Activated T-helper 2 cell treated with anti-CD3 and anti-CD28 coated beads, Interferon-gamma antibody, Interleukin-2, Interleukin-4, amounts not matched to agents 10 μg/mL and 5 μg/mL and 100 μg/mL, durations not matched to agents 14 hours and 24 hours and 36 hours (primary cell): ENCODE measurements at regions of chr11 and their contacts with region 1.

Region 1: DNA sequence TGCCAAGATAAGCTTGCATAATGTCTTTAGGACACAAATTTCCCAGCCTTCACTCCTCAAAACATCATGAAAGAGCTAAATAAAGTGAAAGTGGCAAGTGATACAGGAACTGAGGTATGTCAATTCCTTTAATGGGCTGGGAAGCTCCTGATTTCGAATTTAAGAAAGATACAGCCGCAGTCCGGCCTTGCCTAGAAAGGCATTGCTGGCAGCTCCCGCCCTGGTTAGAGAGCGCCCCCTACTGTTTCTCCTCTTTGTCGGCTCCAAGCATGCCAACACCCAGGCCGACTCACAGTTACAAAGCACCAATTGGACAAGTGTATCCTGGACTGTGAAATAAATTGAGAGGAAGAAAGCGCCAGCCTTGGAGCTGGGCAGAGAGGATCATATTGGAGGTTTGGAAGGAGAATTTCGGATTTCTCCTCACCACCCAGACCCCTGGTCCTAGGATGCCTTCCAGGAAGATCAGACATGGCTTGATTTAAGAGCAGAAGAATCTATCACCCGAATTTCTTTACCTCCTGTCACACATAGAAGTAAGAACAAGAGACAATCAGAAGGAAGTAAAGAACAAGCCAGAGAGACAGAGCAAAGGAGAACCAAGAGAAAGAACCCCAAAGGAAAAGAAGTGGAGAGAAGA is 84.0 kb downstream of the FAM76B start:
- DNase-seq: peak; percentile 73
- H3K4me3 Mint-ChIP-seq: no peak overlapping the region
- H3K27ac Mint-ChIP-seq: no peak overlapping the region
- H3K4me1 Mint-ChIP-seq: peaks cover 19% of the 10 kb centered on the region
- H3K27me3 Mint-ChIP-seq: no peaks in the 10 kb centered on the region

Region 2: GRCh38 chr11:95505927-95506426 is 199.6 kb before region 1 on chr11:
- intact Hi-C with region 1: loop called (anchors 5 kb)
- DNase-seq: no peak
- H3K4me3 Mint-ChIP-seq: no peak overlapping the region
- H3K27ac Mint-ChIP-seq: no peak overlapping the region
- H3K4me1 Mint-ChIP-seq: peaks cover 9% of the 10 kb centered on the region
- H3K27me3 Mint-ChIP-seq: no peaks in the 10 kb centered on the region

Region 3: DNA sequence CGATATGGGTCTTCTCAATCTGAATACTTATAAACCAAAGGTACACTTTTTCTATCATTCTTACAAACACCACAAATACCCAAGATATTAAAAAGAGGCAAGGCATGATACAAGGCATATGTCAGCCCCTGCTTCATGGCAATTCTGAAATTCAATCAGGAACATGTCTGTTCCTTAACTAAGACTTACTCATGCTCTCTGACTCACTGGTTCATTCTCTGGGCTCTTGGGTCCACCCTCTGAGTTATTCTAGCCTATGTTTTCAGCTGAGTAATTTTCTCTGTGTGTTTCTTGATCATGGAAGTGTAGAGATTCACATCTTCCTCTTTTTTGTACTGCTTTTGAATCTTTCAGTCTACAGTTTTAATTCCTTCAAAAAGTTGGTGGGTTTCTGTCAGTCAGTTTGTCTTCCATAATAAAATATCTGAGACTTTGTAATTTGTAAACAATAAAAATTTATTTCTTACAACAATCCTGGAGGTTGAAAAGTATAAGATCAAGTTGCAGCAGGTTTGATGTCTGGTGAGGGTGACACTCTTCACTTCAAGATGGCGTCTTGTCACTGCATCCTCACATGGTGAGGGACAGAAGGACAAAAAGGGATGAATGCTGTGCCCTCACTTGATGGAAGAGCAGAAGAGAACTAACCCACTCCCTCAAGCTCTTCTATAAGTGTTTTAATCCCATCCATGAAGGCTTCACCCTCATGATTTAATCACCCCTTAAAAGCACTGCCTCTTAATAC is 127.7 kb before region 1 on chr11:
- intact Hi-C with region 1: no loop called
- DNase-seq: no peak
- H3K4me3 Mint-ChIP-seq: no peak overlapping the region
- H3K27ac Mint-ChIP-seq: peak overlapping the region; percentile 32
- H3K4me1 Mint-ChIP-seq: peaks cover 15% of the 10 kb centered on the region
- H3K27me3 Mint-ChIP-seq: no peaks in the 10 kb centered on the region

Region 4: DNA sequence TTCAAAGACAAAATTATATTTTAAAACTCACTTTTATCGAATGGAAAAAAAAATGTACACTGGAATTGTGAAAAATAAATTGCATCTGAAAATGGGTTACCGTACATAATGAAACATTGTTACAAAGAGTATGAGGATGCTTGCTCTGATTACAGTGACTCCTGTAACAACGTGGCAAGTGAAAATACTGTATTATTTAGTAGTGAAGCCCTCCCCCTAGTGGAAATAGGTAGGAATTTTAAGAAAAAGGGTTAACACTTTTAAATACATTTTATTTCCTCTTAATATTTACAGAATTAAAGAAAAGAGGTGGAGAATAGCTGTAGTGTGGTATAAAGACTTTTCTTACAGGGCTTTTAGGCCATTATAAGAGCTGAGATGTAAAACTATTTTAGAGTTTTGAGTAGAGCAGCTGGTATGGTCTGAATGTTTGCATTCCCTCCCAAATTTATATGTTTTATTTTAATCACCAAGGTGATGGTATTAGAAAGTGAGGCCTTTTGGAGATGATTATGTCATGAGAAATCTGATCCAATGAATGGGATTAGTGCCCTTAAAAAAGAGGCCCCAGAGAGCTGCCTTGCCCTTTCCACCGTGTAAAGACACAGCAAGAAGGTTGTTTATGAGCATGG is 58.8 kb after region 1 on chr11:
- intact Hi-C with region 1: loop called (anchors 1 kb)
- DNase-seq: no peak
- H3K4me3 Mint-ChIP-seq: no peak overlapping the region
- H3K27ac Mint-ChIP-seq: no peak overlapping the region
- H3K4me1 Mint-ChIP-seq: peaks cover 15% of the 10 kb centered on the region
- H3K27me3 Mint-ChIP-seq: no peaks in the 10 kb centered on the region